ENCODE measurements at regions of chr9 and their contacts with region 1.

Region 1: DNA sequence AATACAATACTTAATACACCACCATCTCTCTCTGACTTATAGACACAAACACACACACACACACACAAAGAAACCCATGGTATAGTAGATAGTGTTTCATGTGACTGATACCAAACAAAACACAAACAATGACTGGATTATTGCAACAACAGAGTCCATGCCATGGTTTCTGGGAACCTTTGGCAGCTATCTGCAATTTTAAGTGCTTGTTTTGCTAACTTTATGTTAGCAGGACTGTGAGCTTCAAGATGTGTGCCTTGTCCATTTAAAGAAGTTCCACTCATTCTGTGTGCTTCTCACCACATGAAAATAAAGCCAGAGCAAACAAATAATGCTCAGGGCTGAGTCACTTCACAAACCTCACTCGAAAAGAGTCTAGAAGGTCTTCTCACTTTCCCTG is 15.1 kb upstream of the LURAP1L start:
- DNase-seq: no peak
- H3K4me3 ChIP-seq: no peak overlapping the region
- H3K27ac ChIP-seq: no peak overlapping the region
- H3K4me1 ChIP-seq: no peaks in the 10 kb centered on the region
- H3K27me3 ChIP-seq: no peaks in the 10 kb centered on the region
- CTCF ChIP-seq: no peak

Region 2: GRCh38 chr9:12680341-12680740 is 79.4 kb before region 1 on chr9:
- intact Hi-C with region 1: no loop called
- DNase-seq: no peak
- H3K4me3 ChIP-seq: no peak overlapping the region
- H3K27ac ChIP-seq: no peak overlapping the region
- H3K4me1 ChIP-seq: no peaks in the 10 kb centered on the region
- H3K27me3 ChIP-seq: no peaks in the 10 kb centered on the region
- CTCF ChIP-seq: no peak

Region 3: GRCh38 chr9:12702160-12702758 is 57.5 kb before region 1 on chr9:
- intact Hi-C with region 1: loop called (anchors 10 kb)
- DNase-seq: no peak
- H3K4me3 ChIP-seq: no peak overlapping the region
- H3K27ac ChIP-seq: no peak overlapping the region
- H3K4me1 ChIP-seq: peaks cover 33% of the 10 kb centered on the region
- H3K27me3 ChIP-seq: no peaks in the 10 kb centered on the region
- CTCF ChIP-seq: peak; percentile 65

Measured in left ventricle myocardium inferior (tissue), 1 donor.